ENCODE measurements at regions of chr9 and their contacts with region 1.

Region 1: DNA sequence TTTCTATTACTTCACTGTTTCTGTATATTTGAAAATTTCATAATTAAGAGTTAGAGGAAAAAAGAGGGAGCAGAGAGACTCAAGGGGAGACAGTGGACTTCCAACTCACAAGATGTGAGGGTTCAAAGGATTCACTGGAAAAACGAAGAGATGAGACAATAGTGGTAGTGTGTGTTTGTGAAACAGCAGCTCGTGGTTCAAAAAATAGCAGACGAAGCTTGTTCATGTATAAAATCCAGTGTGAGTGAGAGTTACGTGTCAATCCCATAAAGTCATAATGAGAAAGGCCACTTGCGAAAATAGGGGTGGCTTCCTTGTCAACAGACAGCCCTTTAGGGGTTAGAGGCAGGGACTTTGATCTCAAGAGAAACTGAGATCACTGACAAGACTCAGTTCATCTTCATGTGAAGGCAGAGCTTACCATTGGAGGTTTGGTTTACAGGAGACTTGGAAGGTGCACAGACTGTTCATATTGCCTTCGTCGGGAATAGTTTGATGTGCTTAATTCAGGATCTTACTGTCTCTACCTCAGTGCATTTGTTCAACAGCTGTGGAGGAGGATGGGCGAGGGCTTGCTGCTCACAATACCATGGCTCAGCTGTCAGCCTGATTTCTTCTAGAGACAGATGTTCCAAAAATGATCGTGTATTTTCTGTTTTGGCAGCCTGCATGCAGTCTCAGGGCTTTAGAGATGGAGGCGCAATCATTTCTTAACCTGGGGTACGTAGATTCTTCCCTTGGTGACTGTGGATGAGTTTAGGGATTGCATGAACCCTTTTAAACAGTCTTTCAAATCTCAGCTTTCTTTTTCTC is 105.7 kb upstream of the KLF9 start:
- DNase-seq: peak; percentile 51
- ATAC-seq: peak; percentile 89
- H3K4me3 ChIP-seq: peak overlapping the region; percentile 26; the same call in 1 of the 2 replicates
- H3K27ac ChIP-seq: peak overlapping the region; percentile 26; the same call in 1 of the 2 replicates
- H3K4me1 ChIP-seq: no peaks in the 10 kb centered on the region
- H3K27me3 ChIP-seq: no peaks in the 10 kb centered on the region
- CTCF ChIP-seq: no peak
- EP300 ChIP-seq: peak in 1 of 2 experiments; percentile 73; a peak in 1 of 4 replicates
- POLR2A ChIP-seq: no peak
- RAD21 ChIP-seq: no peak

Region 2: DNA sequence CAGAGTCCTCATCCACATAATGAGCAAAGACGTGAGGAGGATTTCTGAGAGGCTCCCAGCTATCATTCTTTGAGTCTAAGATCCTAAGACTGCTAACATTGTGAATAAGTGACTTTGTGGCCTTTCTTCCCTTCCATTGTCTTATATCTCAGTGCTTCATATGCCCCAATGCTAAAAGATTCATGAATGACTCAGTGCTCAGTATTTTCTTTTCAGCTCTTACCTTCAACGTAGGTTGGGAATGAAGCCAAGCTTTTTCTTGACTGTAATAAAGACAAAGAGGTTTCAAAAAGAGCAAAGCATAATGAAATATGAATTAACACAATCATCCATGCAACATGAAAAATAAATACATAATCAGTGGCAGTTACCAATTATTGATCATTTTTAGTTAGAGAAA is 1048.7 kb before region 1 on chr9:
- CTCF ChIA-PET with region 1: no interaction called
- POLR2A ChIA-PET with region 1: no interaction called
- RAD21 ChIA-PET with region 1: no interaction called
- SMC1A ChIA-PET with region 1: no interaction called
- in situ Hi-C with region 1: no loop called
- intact Hi-C with region 1: no loop called
- DNase-seq: no peak
- ATAC-seq: no peak
- H3K4me3 ChIP-seq: no peak overlapping the region
- H3K27ac ChIP-seq: no peak overlapping the region
- H3K4me1 ChIP-seq: no peaks in the 10 kb centered on the region
- H3K27me3 ChIP-seq: peaks cover 0 to 3% of the 10 kb centered on the region in 2 experiments; a peak in 2 of 4 replicates
- CTCF ChIP-seq: no peak
- EP300 ChIP-seq: no peak
- POLR2A ChIP-seq: no peak
- RAD21 ChIP-seq: no peak

Region 3: DNA sequence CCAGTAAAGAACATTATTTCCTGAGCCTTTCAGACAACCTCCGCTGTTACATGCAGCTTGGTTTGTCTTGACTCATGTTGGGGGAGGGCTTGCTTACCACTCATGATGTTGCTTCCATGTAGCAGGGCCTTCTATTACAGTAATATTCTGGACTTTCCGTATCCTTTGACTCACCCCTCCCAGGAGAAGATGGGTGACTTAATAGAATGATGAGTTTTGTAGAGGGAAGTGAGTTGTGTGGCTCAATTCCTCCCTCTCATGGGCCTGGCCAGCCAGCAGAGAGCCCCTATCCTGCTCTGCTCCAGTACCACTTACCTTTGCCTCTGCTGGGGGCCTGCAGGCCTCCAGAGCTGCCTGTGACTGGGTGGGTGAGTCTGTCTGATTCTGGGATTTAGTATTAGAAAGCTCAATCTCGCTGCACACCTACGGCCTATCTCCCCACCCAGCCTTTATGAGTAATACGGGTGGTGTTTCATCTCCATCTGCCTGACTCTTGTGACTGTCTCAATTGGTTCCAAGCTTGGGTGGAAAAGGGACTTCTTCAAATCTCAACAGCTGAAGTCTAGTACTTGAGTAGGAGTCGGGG is 53.0 kb before region 1 on chr9:
- CTCF ChIA-PET with region 1: no interaction called
- POLR2A ChIA-PET with region 1: no interaction called
- RAD21 ChIA-PET with region 1: no interaction called
- SMC1A ChIA-PET with region 1: no interaction called
- in situ Hi-C with region 1: loop called (anchors 5 kb)
- intact Hi-C with region 1: no loop called
- DNase-seq: no peak
- ATAC-seq: no peak
- H3K4me3 ChIP-seq: no peak overlapping the region
- H3K27ac ChIP-seq: no peak overlapping the region
- H3K4me1 ChIP-seq: no peaks in the 10 kb centered on the region
- H3K27me3 ChIP-seq: no peaks in the 10 kb centered on the region
- CTCF ChIP-seq: no peak
- EP300 ChIP-seq: no peak
- POLR2A ChIP-seq: no peak
- RAD21 ChIP-seq: no peak

Region 4: DNA sequence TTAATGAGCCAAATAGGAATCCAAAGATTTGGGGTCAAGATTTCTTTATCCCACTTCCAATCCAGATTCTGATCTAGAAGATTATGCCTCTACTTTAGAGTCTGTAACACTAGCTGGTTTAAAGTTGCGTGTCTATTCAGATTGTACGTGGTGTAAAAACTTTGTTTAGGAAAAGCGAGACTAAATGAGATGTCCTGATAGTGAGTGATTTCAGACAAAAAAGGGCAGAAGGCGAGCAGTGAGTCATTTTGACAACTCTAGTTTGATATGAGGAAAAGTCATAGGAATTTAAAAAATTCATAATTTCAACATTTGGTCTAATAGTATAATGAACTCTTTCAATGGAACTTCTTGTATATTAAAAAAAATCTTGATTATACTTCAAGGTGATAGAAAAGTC is 13.9 kb after region 1 on chr9:
- CTCF ChIA-PET with region 1: interaction called, 3 read pairs
- POLR2A ChIA-PET with region 1: interaction called, 3 read pairs
- RAD21 ChIA-PET with region 1: interaction called, 4 read pairs
- SMC1A ChIA-PET with region 1: interaction called, 10 read pairs
- in situ Hi-C with region 1: no loop called
- intact Hi-C with region 1: no loop called
- DNase-seq: no peak
- ATAC-seq: no peak
- H3K4me3 ChIP-seq: no peak overlapping the region
- H3K27ac ChIP-seq: no peak overlapping the region
- H3K4me1 ChIP-seq: no peaks in the 10 kb centered on the region
- H3K27me3 ChIP-seq: no peaks in the 10 kb centered on the region
- CTCF ChIP-seq: no peak
- EP300 ChIP-seq: no peak
- POLR2A ChIP-seq: no peak
- RAD21 ChIP-seq: no peak

Region 5: DNA sequence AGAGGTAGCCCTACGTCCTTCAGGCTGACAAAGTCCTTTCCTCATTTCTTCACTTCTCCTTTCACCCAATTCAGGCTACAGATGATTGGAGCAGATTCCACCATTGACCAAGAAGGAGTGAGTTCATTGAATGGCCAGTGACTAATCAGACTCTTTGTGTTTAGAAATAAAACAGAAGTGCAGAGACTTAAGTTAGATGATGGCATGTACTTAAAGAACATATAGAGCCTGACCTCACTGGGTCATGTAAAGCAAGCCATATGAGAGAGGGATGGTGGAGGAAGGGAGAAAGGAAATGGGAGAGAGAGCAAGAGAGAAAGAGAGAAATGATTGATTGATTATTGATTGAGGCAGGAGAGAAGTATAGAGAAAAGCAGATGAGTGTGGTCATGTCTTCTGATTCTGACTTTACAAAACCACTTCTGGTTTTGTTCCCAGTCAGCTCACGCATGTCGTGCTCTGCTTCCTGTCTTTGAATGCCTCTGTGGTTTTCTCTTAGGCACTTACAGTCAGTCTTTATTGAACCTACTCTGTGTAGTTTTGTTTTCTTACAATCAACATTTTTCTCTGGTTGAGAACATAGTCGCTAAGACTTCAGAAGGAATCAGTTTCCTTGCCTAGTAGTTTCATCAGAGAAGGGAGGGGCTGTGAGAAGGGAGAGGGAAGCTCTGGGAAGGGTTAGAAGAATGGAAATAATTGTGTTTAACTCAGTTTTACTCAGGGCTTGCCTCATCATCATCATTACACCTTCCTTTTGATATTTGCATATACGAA is 43.5 kb after region 1 on chr9:
- CTCF ChIA-PET with region 1: interaction called, 13 read pairs
- POLR2A ChIA-PET with region 1: interaction called, 10 read pairs
- RAD21 ChIA-PET with region 1: interaction called, 19 read pairs
- SMC1A ChIA-PET with region 1: interaction called, 41 read pairs
- in situ Hi-C with region 1: no loop called
- intact Hi-C with region 1: no loop called
- DNase-seq: peak; percentile 83
- ATAC-seq: peak; percentile 94
- H3K4me3 ChIP-seq: no peak overlapping the region
- H3K27ac ChIP-seq: peak overlapping the region; percentile 67
- H3K4me1 ChIP-seq: peaks cover 15% of the 10 kb centered on the region
- H3K27me3 ChIP-seq: no peaks in the 10 kb centered on the region
- CTCF ChIP-seq: no peak
- EP300 ChIP-seq: peak; percentile 96 to 97
- POLR2A ChIP-seq: no peak
- RAD21 ChIP-seq: no peak

Region 6: GRCh38 chr9:70683840-70684239 is 163.7 kb after region 1 on chr9:
- CTCF ChIA-PET with region 1: no interaction called
- POLR2A ChIA-PET with region 1: no interaction called
- RAD21 ChIA-PET with region 1: no interaction called
- SMC1A ChIA-PET with region 1: no interaction called
- in situ Hi-C with region 1: no loop called
- intact Hi-C with region 1: no loop called
- DNase-seq: no peak
- ATAC-seq: no peak
- H3K4me3 ChIP-seq: no peak overlapping the region
- H3K27ac ChIP-seq: no peak overlapping the region
- H3K4me1 ChIP-seq: no peaks in the 10 kb centered on the region
- H3K27me3 ChIP-seq: no peaks in the 10 kb centered on the region
- CTCF ChIP-seq: no peak
- EP300 ChIP-seq: no peak
- POLR2A ChIP-seq: no peak
- RAD21 ChIP-seq: no peak

Region 7: DNA sequence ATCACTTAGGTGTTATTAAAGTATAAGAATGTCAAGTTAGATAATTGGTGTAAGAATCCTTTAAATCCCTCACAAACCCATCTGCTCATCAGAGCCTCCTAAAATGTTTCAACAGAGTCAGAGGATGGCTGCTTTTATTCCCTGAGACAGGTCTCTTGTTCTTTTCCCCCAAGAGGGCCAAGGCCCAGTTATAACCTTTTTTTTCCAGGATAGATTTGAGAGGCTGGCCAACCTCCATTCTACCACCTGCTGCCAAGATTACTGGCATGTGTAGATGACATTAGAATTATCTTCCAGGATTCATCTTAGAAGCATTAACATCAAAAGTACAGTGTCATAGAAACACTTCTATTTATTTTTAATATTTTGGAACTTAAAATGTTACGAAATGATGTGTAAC is 296.2 kb after region 1 on chr9:
- CTCF ChIA-PET with region 1: no interaction called
- POLR2A ChIA-PET with region 1: no interaction called
- RAD21 ChIA-PET with region 1: no interaction called
- SMC1A ChIA-PET with region 1: no interaction called
- in situ Hi-C with region 1: no loop called
- intact Hi-C with region 1: no loop called
- DNase-seq: no peak
- ATAC-seq: no peak
- H3K4me3 ChIP-seq: no peak overlapping the region
- H3K27ac ChIP-seq: no peak overlapping the region
- H3K4me1 ChIP-seq: no peaks in the 10 kb centered on the region
- H3K27me3 ChIP-seq: peaks cover 0 to 2% of the 10 kb centered on the region in 2 experiments; a peak in 2 of 4 replicates
- CTCF ChIP-seq: no peak
- EP300 ChIP-seq: no peak
- POLR2A ChIP-seq: no peak
- RAD21 ChIP-seq: no peak

Region 8: GRCh38 chr9:70962664-70963435 is 442.7 kb after region 1 on chr9:
- CTCF ChIA-PET with region 1: no interaction called
- POLR2A ChIA-PET with region 1: no interaction called
- RAD21 ChIA-PET with region 1: no interaction called
- SMC1A ChIA-PET with region 1: no interaction called
- in situ Hi-C with region 1: no loop called
- intact Hi-C with region 1: no loop called
- DNase-seq: no peak
- ATAC-seq: no peak
- H3K4me3 ChIP-seq: no peak overlapping the region
- H3K27ac ChIP-seq: no peak overlapping the region
- H3K4me1 ChIP-seq: no peaks in the 10 kb centered on the region
- H3K27me3 ChIP-seq: no peaks in the 10 kb centered on the region; a peak in 1 of 4 replicates
- CTCF ChIP-seq: no peak
- EP300 ChIP-seq: no peak
- POLR2A ChIP-seq: no peak
- RAD21 ChIP-seq: no peak